Posterior cingulate gyrus (tissue), 11 donors: ENCODE measurements at regions of chr22 and their contacts with region 1.

Region 1: DNA sequence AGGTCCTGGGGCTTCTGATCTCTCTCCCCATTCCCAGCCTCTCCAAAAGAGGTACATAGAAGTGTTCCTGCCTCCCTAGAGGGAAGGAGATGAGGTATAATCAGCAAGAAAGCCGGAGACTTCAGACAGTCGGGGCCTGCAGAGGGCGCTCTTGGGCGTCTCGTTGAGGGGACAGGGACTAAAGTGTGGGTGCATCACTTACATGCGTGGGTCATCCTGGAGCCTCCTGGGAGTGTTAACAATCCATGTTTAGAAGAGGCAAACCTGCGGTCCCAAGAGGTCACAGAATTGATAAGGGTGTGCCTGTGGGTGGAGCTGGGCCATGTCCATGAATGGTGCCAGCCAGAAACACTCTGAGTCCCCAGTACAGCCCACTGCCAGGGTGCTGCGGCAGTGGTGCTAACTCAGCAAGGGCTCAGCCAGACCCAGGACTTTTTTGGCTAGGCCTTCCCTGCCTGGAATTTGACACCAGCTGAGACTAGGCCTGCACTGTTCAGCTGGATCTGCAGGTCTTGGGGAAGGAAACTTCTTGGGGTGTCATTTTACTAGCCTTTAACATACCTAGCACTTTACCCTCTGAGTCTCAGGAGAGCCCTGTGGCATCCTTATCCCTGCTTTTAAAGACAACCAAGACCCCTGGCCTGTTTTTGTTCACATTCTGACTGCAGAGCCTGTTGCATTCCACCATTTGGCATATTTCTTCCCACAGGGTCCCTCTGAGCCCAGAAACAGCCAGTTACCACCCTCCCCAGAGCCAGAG is 5.5 kb downstream of the YDJC start:
- DNase-seq: peak in 6 of 10 donors; percentile 50 to 93 (median 63)

Region 2: DNA sequence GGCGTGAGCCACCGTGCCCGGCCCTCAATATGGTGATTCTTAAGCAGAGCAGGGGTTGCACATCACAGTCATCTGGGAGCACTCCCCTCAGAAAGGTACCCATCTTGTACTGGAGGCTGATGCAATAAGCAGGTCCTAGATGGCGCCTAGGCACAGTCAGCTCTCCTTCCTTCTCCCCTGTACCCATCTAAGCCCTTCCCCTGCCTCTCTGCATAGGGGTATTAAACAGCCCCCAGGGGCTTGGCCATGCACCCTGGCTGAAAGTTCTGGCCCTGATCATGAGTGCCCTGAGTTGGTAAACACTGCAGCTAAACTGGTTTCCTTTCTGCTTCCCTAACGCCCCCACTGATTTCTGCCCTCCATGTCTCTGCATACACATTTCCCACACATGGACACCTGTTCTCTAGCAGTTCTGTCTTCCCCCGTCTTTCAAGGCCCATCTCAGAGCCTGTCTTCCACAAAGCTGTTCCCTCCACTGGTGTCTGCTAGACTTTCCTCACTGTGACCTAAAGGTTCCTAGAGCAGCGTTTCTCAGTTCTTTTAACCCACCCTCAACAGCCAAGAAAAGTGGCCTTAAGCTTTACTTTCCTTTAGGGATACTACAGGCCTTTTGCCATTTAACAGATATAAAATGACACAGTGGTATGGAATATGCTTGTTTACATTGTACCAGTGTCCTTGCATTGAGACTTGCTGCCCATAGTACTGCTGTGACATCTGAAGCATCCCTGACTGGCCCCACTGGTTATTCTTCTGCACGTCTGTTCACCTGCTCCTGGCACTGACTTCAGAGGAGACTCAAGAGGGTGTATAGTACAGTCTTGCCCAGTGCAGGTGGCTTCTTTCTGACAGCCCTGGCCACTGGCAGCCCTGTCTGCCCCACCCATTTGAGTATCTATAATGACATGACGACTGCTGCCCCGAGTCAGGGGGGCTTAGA is 41.2 kb before region 1 on chr22:
- intact Hi-C with region 1: loop called (anchors 5 kb)
- DNase-seq: peak in 3 of 10 donors; percentile 10 to 54 (median 38)